ENCODE measurements at regions of chr7 and their contacts with region 1.

Region 1: GRCh38 chr7:100211342-100211780 is 8.4 kb upstream of the PVRIG start:
- DNase-seq: no peak
- H3K4me3 ChIP-seq: no peak overlapping the region
- H3K27ac ChIP-seq: no peak overlapping the region
- H3K4me1 ChIP-seq: peaks cover 3% of the 10 kb centered on the region
- H3K27me3 ChIP-seq: no peaks in the 10 kb centered on the region
- CTCF ChIP-seq: no peak

Region 2: GRCh38 chr7:99693427-99694200 is 517.7 kb before region 1 on chr7:
- intact Hi-C with region 1: no loop called
- DNase-seq: peak; percentile 45
- H3K4me3 ChIP-seq: no peak overlapping the region
- H3K27ac ChIP-seq: no peak overlapping the region
- H3K4me1 ChIP-seq: peaks cover 3% of the 10 kb centered on the region
- H3K27me3 ChIP-seq: no peaks in the 10 kb centered on the region
- CTCF ChIP-seq: no peak

Region 3: GRCh38 chr7:100141555-100141949 is 69.8 kb before region 1 on chr7:
- intact Hi-C with region 1: loop called (anchors 5 kb)
- DNase-seq: peak; percentile 38
- H3K4me3 ChIP-seq: no peak overlapping the region
- H3K27ac ChIP-seq: peak overlapping the region; percentile 62
- H3K4me1 ChIP-seq: peaks cover 3% of the 10 kb centered on the region
- H3K27me3 ChIP-seq: no peaks in the 10 kb centered on the region
- CTCF ChIP-seq: no peak